Activated T-helper 2 cell treated with anti-CD3 and anti-CD28 coated beads, Interferon-gamma antibody, Interleukin-2, Interleukin-4, amounts not matched to agents 10 μg/mL and 5 μg/mL and 100 μg/mL, durations not matched to agents 14 hours and 24 hours and 36 hours (primary cell): ENCODE measurements at regions of chr6 and their contacts with region 1.

Region 1: DNA sequence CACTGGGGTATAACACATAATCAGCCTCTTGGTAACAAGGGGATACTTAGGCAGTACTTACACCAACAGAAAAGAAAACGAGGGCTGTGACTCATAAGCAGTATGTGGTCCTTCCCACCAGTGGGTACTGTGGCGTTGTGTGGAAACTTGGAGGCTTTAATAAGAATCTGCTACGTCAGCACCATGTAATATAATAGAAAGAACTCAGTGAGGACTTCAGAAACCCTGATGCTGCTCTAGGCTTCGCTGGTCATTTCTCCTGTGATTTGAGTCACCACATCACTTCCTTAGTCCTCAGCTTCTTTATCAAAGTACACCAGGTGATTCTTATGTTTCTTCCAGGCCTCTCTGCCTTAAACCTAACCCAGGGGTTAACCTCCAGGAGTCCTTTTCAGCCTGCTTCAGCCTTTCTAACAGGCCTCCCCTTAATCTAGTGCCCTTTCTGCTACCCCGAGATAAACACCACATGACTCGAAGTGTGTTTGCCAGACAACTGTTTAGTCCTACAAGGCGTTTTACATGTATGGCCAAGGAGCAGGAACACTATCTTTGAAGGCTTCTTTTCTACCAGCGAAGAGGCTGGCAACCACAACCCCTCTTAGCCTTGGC is 68.5 kb downstream of the FYN start:
- DNase-seq: peak; percentile 59
- H3K4me3 Mint-ChIP-seq: peak overlapping the region; percentile 26
- H3K27ac Mint-ChIP-seq: peak overlapping the region; percentile 96
- H3K4me1 Mint-ChIP-seq: peaks cover 76% of the 10 kb centered on the region
- H3K27me3 Mint-ChIP-seq: no peaks in the 10 kb centered on the region

Region 2: DNA sequence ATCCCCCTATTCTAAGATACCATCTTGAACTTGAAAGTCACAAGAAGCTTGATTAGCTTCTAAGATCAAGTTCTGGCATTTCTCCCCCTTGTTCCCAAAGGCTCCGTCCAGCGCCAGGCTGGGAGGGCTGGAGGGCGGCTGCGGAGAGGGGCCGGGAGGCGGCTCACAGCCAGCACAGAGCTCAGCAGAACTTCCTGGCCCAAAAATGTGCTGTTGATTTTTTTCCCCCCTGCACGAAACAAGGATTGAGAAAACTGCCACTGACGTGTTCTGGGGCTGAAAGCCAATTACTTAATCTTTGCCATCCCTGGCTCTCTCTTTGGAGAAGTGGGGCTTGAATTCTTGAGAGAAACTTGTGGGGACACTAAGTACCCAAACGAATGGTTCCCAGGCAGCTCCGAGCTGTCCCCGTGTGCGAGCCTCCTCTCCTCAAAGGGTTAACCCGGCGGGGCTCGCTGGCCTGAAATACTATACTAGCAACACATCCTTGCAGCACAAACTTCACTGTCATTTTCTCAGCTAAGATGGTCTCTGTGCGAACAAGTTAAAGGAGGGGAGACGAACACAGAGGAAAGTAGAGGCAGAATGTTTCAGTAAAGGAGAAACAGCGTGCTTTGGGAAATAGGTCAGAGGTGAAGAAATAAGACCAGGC is 199.5 kb before region 1 on chr6:
- intact Hi-C with region 1: loop called (anchors 5 kb)
- DNase-seq: peak; percentile 15
- H3K4me3 Mint-ChIP-seq: peak overlapping the region; percentile 90
- H3K27ac Mint-ChIP-seq: peak overlapping the region; percentile 98
- H3K4me1 Mint-ChIP-seq: peaks cover 49% of the 10 kb centered on the region
- H3K27me3 Mint-ChIP-seq: no peaks in the 10 kb centered on the region

Region 3: GRCh38 chr6:111777357-111777756 is 27.4 kb before region 1 on chr6:
- intact Hi-C with region 1: loop called (anchors 1 kb)
- DNase-seq: no peak
- H3K4me3 Mint-ChIP-seq: peak overlapping the region; percentile 2
- H3K27ac Mint-ChIP-seq: peak overlapping the region; percentile 66
- H3K4me1 Mint-ChIP-seq: peaks cover 71% of the 10 kb centered on the region
- H3K27me3 Mint-ChIP-seq: no peaks in the 10 kb centered on the region

Region 4: GRCh38 chr6:111823831-111824607 is 19.3 kb after region 1 on chr6:
- intact Hi-C with region 1: loop called (anchors 1 kb)
- DNase-seq: no peak
- H3K4me3 Mint-ChIP-seq: peak overlapping the region; percentile 66
- H3K27ac Mint-ChIP-seq: peak overlapping the region; percentile 89
- H3K4me1 Mint-ChIP-seq: peaks cover 68% of the 10 kb centered on the region
- H3K27me3 Mint-ChIP-seq: no peaks in the 10 kb centered on the region

Region 5: DNA sequence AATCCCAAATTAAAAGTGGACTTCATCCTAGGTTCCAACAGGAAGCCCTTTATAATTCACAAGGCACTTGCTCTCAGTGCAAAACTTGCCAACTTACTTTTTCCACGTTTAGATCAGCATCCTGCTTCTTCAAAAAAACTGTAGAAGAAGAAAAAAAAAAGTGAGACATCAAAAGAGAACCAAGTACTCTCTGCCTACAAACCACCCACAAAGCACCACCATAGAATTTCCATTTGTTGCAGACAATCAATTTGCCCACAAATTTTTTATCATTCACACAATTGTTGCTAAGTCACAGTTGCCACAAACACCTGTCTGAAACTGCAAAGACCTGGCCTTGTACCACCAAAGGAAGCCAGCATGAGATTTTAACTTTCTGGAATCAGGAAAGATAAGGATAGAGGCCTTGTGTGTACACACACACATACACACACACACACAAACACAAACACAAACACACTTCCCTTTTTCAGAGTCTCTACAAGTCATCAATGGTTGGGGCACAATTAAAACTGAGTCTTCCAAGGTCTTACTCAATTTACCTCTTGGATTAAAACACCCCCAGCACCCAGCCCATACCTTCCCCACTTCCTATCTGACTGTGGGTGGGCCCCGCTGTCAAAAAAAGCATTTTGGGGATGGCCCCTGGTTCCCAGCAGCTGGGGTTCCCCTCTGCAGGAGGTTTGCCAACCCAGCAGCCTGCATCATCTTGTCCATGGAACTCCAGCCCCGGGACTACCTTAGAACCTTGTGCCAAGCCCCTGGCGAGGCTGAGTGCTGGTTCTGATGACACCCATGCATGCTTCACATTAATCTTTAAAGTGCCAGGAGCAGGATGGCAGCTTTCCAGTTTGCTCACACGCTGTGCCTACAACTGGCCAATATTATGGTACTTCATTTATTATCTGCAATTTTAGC is 42.0 kb after region 1 on chr6:
- intact Hi-C with region 1: loop called (anchors 1 kb)
- DNase-seq: no peak
- H3K4me3 Mint-ChIP-seq: peak overlapping the region; percentile 53
- H3K27ac Mint-ChIP-seq: peak overlapping the region; percentile 92
- H3K4me1 Mint-ChIP-seq: peaks cover 71% of the 10 kb centered on the region
- H3K27me3 Mint-ChIP-seq: no peaks in the 10 kb centered on the region

Region 6: DNA sequence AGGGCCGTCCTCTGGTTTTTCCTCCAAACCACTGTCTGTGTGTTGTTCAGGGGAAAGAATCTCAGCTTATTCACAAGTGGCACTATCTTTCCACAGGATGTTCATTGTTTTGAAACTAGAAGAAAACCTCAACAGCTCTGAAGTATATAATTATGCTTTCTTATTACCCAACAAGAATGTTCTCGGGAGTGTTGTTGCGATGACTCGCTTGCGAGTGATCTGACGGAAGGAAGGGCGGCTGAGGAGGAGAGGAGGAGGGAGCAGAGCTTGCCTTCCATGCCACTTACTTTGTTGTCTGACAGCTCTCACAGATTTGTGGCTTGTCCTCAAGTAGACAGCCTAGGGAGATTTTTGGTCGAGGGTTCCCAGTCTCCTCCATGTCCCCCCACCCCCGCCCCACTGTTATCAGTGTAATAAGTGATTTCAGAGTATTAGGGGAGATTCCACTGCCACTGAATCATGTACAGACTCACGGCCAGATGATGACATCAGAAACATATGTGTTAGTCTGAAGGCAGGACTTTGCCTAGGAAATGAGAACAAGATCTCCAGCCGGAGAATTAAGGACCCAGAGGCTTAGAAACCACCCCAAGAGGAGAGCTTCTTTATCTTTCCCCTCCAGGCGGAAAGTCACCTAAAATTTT is 168.5 kb after region 1 on chr6:
- intact Hi-C with region 1: loop called (anchors 5 kb)
- DNase-seq: peak; percentile 24
- H3K4me3 Mint-ChIP-seq: peak overlapping the region; percentile 24
- H3K27ac Mint-ChIP-seq: peak overlapping the region; percentile 70
- H3K4me1 Mint-ChIP-seq: peaks cover 53% of the 10 kb centered on the region
- H3K27me3 Mint-ChIP-seq: peaks cover 13% of the 10 kb centered on the region

Region 7: DNA sequence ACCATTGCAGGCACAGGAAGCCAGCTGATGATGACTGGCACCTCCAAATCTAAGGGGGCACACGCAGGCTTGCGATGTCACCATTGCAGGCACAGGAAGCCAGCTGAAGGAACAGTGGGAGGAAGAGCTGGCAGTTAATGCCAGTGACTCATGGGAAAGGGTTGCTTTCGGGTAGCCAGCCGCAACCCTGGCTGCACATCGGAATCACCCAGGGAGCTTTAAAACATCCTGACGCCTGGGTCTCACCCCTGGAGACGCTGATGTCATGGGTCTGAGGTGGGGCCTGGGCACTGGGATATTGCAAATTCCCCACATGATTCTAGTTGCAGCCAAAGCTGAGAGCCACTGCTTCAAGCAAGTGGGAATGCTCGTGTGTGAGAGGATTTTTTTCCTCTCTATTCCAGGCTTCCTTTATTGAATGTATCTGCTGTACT is 233.1 kb after region 1 on chr6:
- intact Hi-C with region 1: loop called (anchors 1 kb)
- DNase-seq: no peak
- H3K4me3 Mint-ChIP-seq: no peak overlapping the region
- H3K27ac Mint-ChIP-seq: peak overlapping the region; percentile 29
- H3K4me1 Mint-ChIP-seq: peaks cover 67% of the 10 kb centered on the region
- H3K27me3 Mint-ChIP-seq: no peaks in the 10 kb centered on the region